ENCODE measurements at regions of chr7 and their contacts with region 1.

Region 1: DNA sequence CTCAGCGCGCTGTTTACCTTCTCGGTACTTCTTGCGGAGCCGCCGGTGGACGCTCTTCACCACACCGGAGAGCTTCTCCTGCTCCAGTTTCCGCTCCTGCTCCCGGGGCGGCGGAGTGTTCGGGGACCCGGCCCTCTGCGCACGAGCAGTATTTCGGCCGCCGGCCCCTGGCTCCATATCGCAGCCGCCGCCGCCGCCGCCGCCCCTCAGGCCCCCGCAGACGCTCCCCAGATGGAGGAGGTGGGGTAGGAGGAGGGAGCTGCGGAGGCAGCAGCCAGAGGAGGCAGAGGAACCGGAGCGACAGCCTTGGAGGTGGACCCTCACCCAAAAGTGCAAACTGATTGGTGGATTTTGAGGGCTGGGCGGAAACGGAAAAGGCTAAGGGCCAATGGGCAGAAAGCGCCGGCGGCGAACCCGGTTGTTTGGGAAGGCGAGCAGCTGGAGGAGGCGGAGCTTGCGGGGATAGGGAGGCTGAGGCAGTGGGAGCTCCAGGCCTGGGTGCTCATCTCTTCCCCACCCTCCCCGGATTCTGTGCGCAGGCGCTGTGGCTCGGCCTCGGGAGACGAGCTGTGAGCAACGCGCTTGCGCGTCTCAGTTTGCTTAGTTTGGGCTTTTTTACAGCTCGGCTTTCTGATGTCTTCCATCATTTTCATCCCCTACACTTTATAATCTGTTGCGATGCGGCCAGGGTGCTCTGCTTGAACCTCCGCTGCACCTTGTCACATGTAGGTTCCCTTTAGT is 146.9 kb downstream of the GPR85 start:
- DNase-seq: peak; percentile 97
- ATAC-seq: peak; percentile 95
- H3K4me3 Mint-ChIP-seq: peak overlapping the region; percentile 99
- H3K27ac Mint-ChIP-seq: peak overlapping the region; percentile 97
- H3K4me1 Mint-ChIP-seq: peaks cover 46% of the 10 kb centered on the region
- H3K27me3 Mint-ChIP-seq: no peaks in the 10 kb centered on the region
- CTCF ChIP-seq: no peak

Region 2: GRCh38 chr7:112206238-112207044 is 733.3 kb before region 1 on chr7 and contains the starts of genes DOCK4 and ZNF277:
- CTCF ChIA-PET with region 1: no interaction called
- POLR2A ChIA-PET with region 1: no interaction called
- intact Hi-C with region 1: loop called (anchors 1 kb)
- DNase-seq: peak; percentile 99
- ATAC-seq: peak; percentile 90
- H3K4me3 Mint-ChIP-seq: peak within 1 kb of the TSS; percentile 97
- H3K27ac Mint-ChIP-seq: peak within 1 kb of the TSS; percentile 83
- H3K4me1 Mint-ChIP-seq: peaks cover 37% of the 10 kb centered on the region
- H3K27me3 Mint-ChIP-seq: peaks cover 25% of the 10 kb centered on the region
- CTCF ChIP-seq: no peak
- total RNA-seq, gene DOCK4: 0.61 and 0.73 TPM in 2 replicates
- total RNA-seq, gene ZNF277: 12.6 and 13.1 TPM in 2 replicates

Region 3: DNA sequence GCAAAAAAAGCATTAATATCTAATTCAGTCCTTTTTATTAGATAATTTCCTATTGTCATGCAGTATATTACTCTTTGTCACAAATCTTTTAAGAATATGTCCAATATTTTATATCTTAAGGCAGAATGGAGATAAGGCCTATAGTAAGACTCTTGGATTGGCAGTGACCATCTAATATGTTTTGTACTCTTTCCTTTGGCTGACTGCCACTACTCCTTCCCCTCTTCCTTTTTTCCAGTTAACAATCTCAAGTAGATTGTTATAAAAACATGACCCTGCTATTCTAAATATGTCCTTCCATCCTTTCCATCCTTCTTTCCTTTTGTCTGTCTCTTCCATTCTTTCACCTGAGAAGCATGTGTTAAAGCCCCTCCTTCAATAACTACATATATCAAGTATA is 56.8 kb before region 1 on chr7:
- CTCF ChIA-PET with region 1: no interaction called
- POLR2A ChIA-PET with region 1: no interaction called
- intact Hi-C with region 1: loop called (anchors 10 kb)
- DNase-seq: no peak
- ATAC-seq: no peak
- H3K4me3 Mint-ChIP-seq: no peak overlapping the region
- H3K27ac Mint-ChIP-seq: peak overlapping the region; percentile 5
- H3K4me1 Mint-ChIP-seq: peaks cover 38% of the 10 kb centered on the region
- H3K27me3 Mint-ChIP-seq: no peaks in the 10 kb centered on the region
- CTCF ChIP-seq: no peak

Region 4: GRCh38 chr7:112982441-112983063 is 42.8 kb after region 1 on chr7:
- CTCF ChIA-PET with region 1: no interaction called
- POLR2A ChIA-PET with region 1: interaction called, 3 read pairs
- intact Hi-C with region 1: loop called (anchors 1 kb)
- DNase-seq: no peak
- ATAC-seq: peak; percentile 62
- H3K4me3 Mint-ChIP-seq: no peak overlapping the region
- H3K27ac Mint-ChIP-seq: peak overlapping the region; percentile 79
- H3K4me1 Mint-ChIP-seq: peaks cover 28% of the 10 kb centered on the region
- H3K27me3 Mint-ChIP-seq: no peaks in the 10 kb centered on the region
- CTCF ChIP-seq: no peak

Region 5: DNA sequence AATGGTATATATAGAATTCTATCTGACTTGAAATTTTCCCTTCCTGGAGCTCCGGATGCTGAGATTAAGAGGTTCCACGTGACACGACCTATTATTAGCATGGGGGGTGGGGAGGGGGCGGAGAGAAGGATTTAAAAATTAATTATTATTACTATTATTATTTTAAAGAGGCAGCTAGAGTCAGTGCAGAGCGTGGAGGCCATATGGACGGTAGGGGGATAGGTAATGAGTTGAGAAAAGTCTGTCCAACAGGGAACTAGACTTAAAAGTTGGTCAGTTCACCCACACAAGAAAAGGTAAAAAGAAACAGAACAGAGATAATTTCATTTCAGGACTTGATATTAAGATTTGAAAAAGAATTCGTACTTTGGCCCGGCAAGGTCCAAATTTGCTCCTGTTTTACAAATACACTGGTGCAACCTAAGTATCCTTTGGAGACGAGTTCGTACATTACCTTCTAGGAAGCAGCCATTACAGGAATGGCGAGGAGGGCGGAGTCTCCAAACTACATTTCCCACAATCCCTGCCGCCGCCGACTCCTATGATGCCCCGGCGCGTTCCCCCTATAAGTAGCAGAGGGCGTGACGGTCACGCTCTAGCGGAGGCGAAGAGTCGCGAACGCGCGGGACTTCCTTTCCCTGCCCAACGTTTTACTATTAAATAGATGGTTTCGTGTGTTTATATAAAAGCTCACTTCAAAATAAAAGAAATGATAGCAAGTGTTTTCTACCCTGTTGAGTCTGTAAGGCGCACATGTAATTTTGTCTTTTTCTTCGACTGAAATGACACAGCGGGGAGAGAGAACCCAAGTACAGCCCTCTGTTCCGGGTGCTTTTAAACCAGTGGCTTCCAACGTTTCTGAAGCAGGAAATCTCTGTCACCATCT is 178.6 kb after region 1 on chr7 and contains the start of gene SMIM30:
- CTCF ChIA-PET with region 1: no interaction called
- POLR2A ChIA-PET with region 1: interaction called, 11 read pairs
- intact Hi-C with region 1: loop called (anchors 1 kb)
- DNase-seq: peak; percentile 77
- ATAC-seq: peak; percentile 100
- H3K4me3 Mint-ChIP-seq: peak within 1 kb of the TSS; percentile 93
- H3K27ac Mint-ChIP-seq: peak within 1 kb of the TSS; percentile 97
- H3K4me1 Mint-ChIP-seq: peaks cover 23% of the 10 kb centered on the region
- H3K27me3 Mint-ChIP-seq: no peaks in the 10 kb centered on the region
- CTCF ChIP-seq: no peak
- total RNA-seq, gene SMIM30: 28.7 and 30.6 TPM in 2 replicates

Region 6: GRCh38 chr7:113338071-113338696 is 398.4 kb after region 1 on chr7:
- CTCF ChIA-PET with region 1: no interaction called
- POLR2A ChIA-PET with region 1: no interaction called
- intact Hi-C with region 1: no loop called
- DNase-seq: no peak
- ATAC-seq: no peak
- H3K4me3 Mint-ChIP-seq: no peak overlapping the region
- H3K27ac Mint-ChIP-seq: no peak overlapping the region
- H3K4me1 Mint-ChIP-seq: no peaks in the 10 kb centered on the region
- H3K27me3 Mint-ChIP-seq: no peaks in the 10 kb centered on the region
- CTCF ChIP-seq: no peak

Region 7: GRCh38 chr7:113421696-113422330 is 482.1 kb after region 1 on chr7:
- CTCF ChIA-PET with region 1: no interaction called
- POLR2A ChIA-PET with region 1: no interaction called
- intact Hi-C with region 1: loop called (anchors 1 kb)
- DNase-seq: peak; percentile 32
- ATAC-seq: peak; percentile 99
- H3K4me3 Mint-ChIP-seq: no peak overlapping the region
- H3K27ac Mint-ChIP-seq: no peak overlapping the region
- H3K4me1 Mint-ChIP-seq: peaks cover 3% of the 10 kb centered on the region
- H3K27me3 Mint-ChIP-seq: no peaks in the 10 kb centered on the region
- CTCF ChIP-seq: no peak